ENCODE measurements at regions of chr19 and their contacts with region 1.

Region 1: GRCh38 chr19:45643024-45643926 is 4.1 kb upstream of the EML2 start:
- DNase-seq: peak; percentile 85
- CTCF ChIP-seq: peak; percentile 99

Region 2: GRCh38 chr19:45478454-45479238 is 164.6 kb before region 1 on chr19:
- CTCF ChIA-PET with region 1: interaction called, 19 read pairs
- POLR2A ChIA-PET with region 1: no interaction called
- DNase-seq: peak; percentile 79
- CTCF ChIP-seq: peak; percentile 91

Region 3: GRCh38 chr19:45523642-45524256 is 119.5 kb before region 1 on chr19:
- CTCF ChIA-PET with region 1: interaction called, 17 read pairs
- POLR2A ChIA-PET with region 1: no interaction called
- DNase-seq: peak; percentile 88
- CTCF ChIP-seq: peak; percentile 84

Region 4: DNA sequence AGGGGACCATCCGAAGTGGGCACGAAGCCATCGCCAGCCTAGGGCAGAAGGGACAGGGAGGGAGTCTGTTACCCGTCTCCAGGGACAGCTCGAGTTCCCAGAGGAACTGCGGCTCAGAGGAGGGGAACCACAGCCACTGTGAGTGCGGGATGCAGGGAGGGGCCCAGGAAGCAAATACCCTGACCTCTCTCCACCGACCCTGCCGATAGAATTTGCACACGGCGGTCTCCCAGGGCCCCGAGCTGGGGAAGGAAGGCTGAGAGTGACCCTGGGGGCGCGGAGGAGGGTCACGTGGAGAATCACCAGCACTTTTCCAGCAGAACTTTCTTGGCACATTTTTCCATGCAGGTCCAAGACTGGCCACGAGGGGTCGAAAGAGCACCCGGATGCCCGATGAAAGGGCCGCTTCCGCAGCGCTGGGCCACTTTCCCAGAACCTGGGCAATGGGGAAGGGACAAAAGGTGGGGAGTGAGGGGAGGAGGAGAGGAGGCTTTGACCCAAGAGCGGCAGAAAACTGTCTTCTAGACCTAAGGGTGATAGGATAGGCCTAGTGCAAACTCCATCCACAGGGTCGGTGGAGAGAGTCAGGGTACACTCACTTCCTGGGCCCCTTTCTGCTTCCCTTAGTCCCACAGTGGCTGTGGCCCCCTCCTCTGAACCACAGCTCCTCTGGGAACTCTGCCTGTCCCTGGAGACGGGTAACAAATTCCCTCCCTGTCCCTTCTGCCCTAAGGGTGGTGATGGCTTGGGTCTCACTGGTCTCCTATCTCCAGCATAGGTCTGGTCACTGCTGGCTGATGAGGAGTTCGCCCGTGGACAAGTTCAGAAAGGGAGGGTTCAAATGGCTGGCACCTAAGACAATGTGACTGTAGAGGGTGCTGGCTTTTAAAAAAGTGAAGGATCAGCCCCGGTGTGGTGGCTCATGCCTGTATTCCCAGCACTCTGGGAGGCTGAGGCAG is 35.9 kb before region 1 on chr19:
- CTCF ChIA-PET with region 1: interaction called, 60 read pairs
- POLR2A ChIA-PET with region 1: no interaction called
- DNase-seq: peak; percentile 61
- CTCF ChIP-seq: peak; percentile 59

Region 5: DNA sequence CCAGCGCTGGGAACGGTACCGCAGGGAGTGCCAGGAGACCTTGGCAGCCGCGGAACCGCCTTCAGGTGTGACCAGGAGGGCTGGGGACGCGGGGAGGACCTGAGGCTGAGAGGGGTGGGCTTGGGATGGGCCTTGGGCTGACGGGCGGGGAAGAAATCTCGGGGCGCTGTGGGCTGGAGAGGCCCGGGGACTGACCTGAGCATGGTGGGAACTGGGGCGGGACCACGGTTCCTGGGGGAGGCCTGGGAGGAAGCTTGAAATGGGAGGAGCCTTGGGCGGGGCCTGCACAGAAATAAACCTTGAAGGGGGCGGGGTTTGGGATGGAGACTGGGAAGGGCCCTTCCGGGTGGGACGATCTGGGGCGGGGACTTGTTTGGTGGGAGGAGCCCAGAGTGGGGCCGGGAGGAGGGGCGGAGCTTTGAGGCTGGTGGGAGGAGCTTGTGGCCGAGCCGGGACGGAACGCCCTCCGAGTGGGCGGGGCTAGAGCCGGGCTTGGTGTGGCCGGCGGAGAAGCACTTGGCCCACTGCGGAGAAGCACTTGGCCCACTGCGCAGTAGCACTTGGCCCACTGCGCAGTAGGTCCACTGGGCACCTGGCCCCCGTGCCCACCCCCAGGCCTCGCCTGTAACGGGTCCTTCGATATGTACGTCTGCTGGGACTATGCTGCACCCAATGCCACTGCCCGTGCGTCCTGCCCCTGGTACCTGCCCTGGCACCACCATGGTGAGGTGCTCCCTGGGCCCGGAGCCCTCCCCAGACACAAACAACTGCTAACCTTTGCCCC is 27.6 kb after region 1 on chr19:
- CTCF ChIA-PET with region 1: interaction called, 33 read pairs
- POLR2A ChIA-PET with region 1: interaction called, 7 read pairs
- DNase-seq: peak; percentile 99
- CTCF ChIP-seq: no peak

Measured in GM10248 (cell line).